Heart left ventricle (tissue), 16 donors: ENCODE measurements at regions of chr7 and their contacts with region 1.

Region 1: DNA sequence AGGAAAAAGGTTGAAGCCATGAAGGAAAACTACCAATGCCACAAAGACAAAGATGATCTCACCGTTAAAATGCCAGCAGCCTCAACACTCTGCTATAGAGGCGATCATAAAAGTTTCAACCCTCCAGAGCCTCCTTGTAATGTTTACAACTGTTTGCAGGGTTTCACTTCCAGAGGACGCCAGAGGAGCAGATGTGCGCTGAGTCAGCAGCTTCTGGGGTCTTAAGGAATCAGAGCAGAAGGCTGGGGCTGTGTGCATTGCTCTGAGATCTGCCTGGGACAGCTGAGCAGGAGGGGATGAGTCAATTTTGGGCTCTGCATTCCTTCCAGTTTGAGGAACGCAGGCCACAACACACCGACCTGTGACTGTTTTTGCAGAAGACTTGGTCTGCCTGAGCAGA is 98.3 kb downstream of the TMEM130 start:
- DNase-seq: peak in 3 of 5 donors; percentile 26 to 78 (median 60)
- ATAC-seq: peak in 1 of 4 donors; percentile 71
- H3K4me3 ChIP-seq: no peak overlapping the region
- H3K27ac ChIP-seq: no peak overlapping the region
- H3K4me1 ChIP-seq: no peaks in the 10 kb centered on the region
- H3K27me3 ChIP-seq: peaks cover 0 to 11% (median 0%) of the 10 kb centered on the region in 9 donors
- CTCF ChIP-seq: no peak
- POLR2A ChIP-seq: no peak

Region 2: GRCh38 chr7:98802088-98802780 is 30.7 kb after region 1 on chr7:
- intact Hi-C with region 1: no loop called
- DNase-seq: peak in 4 of 5 donors; percentile 36 to 78 (median 54)
- ATAC-seq: peak; percentile 62 to 96 (median 80)
- H3K4me3 ChIP-seq: no peak overlapping the region
- H3K27ac ChIP-seq: no peak overlapping the region
- H3K4me1 ChIP-seq: peaks cover 0 to 7% (median 0%) of the 10 kb centered on the region in 12 donors
- H3K27me3 ChIP-seq: peaks cover 0 to 9% (median 0%) of the 10 kb centered on the region in 9 donors
- CTCF ChIP-seq: no peak
- POLR2A ChIP-seq: no peak

Region 3: DNA sequence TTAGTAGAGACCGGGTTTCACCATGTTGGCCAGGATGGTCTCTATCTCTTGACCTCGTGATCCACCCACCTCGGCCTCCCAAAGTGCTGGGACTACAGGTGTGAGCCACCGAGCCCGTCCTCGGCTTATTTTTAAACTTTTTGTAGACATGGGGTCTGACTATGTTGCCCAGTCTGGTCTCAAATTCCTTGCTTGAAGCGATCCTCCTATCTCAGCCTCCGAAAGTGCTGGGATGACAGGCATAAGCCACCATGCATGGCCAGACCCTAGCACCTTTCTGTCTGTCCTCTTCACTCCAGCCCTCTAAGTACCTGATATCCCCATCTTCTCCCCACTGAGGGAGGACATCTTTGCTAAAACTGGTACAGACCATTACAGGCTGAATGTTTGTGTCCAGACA is 56.8 kb after region 1 on chr7:
- intact Hi-C with region 1: loop called in 1 of 10 experiments (anchors 2 kb)
- DNase-seq: no peak
- ATAC-seq: no peak
- H3K4me3 ChIP-seq: no peak overlapping the region
- H3K27ac ChIP-seq: peak overlapping the region in 1 of 12 donors; percentile 85
- H3K4me1 ChIP-seq: peaks cover 0 to 18% (median 0%) of the 10 kb centered on the region in 12 donors
- H3K27me3 ChIP-seq: no peaks in the 10 kb centered on the region
- CTCF ChIP-seq: no peak
- POLR2A ChIP-seq: no peak

Region 4: DNA sequence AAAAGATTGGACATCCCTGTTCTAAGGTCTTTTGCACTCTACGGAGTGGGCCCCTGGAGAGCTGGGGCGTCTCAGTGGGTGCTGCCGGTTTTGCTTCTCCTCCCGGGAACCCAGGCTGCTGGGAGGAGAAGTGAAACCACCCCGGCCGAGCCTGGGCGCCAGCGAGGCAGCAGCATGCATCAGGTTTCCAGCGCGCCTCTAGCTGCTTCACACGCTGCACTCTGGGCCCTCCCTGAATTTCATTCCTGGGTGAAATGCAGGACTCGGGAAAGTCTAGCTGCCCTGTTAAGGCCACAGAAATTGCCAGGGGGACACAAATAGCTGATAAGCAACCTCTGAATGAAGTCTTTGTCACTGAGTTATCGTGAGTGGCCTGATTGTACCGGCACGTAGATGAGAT is 234.3 kb after region 1 on chr7:
- intact Hi-C with region 1: no loop called
- DNase-seq: no peak
- ATAC-seq: no peak
- H3K4me3 ChIP-seq: no peak overlapping the region
- H3K27ac ChIP-seq: no peak overlapping the region
- H3K4me1 ChIP-seq: no peaks in the 10 kb centered on the region
- H3K27me3 ChIP-seq: no peaks in the 10 kb centered on the region
- CTCF ChIP-seq: no peak
- POLR2A ChIP-seq: no peak